ENCODE measurements at regions of chr5 and their contacts with region 1.

Region 1: GRCh38 chr5:150700594-150701293 is at the start of gene RBM22:
- DNase-seq: peak; percentile 92 to 95
- ATAC-seq: peak; percentile 98 to 100 (median 99)
- H3K4me3 ChIP-seq: peak within 1 kb of the TSS; percentile 42 to 100 (median 91)
- H3K27ac ChIP-seq: peak within 1 kb of the TSS; percentile 77 to 100 (median 98)
- H3K4me1 ChIP-seq: peaks cover 0 to 24% (median 19%) of the 10 kb centered on the region in 9 donors
- H3K27me3 ChIP-seq: no peaks in the 10 kb centered on the region
- CTCF ChIP-seq: peak; percentile 28 to 84 (median 67)
- total RNA-seq, gene RBM22: 23.4 to 41.0 (median 29.3) TPM

Region 2: DNA sequence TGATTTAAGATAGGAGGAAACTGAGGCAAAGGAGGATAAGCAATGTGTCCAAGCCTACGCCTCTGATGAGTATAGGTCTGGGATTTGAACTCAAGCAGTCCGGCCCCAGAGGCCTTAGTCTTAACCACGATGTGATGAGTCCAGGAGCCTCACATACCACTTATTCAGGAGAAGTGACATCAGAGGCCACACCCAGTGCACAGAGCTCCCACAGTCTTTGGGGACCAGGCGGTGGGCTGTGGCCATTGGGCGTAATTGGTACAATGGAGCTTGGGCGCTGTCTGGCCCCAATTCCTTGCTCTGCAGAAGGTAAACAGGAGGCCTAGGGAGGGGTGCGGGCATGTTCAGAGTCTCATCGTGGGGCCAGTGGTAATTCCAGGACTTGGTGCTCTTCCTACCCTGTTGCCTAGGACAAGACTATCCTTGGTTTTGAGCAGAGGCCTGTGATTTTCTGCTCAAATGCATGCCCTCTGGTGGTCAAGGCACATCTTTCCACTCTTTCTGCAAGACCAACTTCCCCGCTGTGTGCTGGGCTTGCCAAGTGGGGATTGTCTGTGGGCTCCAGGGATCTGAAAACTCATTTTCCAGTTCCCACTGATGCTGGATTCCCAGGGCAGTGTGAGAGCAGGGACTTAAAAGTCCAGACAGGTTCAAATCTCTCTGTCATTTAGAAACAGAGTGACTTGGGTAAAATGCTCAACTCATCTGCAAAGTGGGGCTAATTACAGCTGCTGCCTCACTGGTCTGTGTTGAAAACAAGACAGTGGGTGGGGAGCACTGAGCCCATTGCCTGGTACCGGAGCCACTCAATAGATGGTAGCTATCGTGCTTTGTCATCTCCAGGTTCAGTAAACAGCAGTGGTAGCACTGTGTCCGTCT is 177.0 kb before region 1 on chr5:
- intact Hi-C with region 1: no loop called
- DNase-seq: peak in 1 of 2 donors; percentile 58
- ATAC-seq: peak; percentile 27 to 78 (median 62)
- H3K4me3 ChIP-seq: no peak overlapping the region
- H3K27ac ChIP-seq: peak overlapping the region; percentile 27 to 90 (median 74)
- H3K4me1 ChIP-seq: peaks cover 31 to 91% (median 67%) of the 10 kb centered on the region in 9 donors
- H3K27me3 ChIP-seq: no peaks in the 10 kb centered on the region
- CTCF ChIP-seq: peak; percentile 39 to 80 (median 68)

Region 3: GRCh38 chr5:150560401-150561193 is 140.1 kb before region 1 on chr5:
- intact Hi-C with region 1: loop called in 7 of 10 experiments (anchors 2 to 5 kb)
- DNase-seq: peak in 1 of 2 donors; percentile 91
- ATAC-seq: peak; percentile 78 to 91 (median 87)
- H3K4me3 ChIP-seq: no peak overlapping the region
- H3K27ac ChIP-seq: peak overlapping the region in 1 of 10 donors; percentile 0
- H3K4me1 ChIP-seq: peaks cover 0 to 29% (median 8%) of the 10 kb centered on the region in 9 donors
- H3K27me3 ChIP-seq: no peaks in the 10 kb centered on the region
- CTCF ChIP-seq: peak; percentile 88 to 97 (median 95)

Region 4: DNA sequence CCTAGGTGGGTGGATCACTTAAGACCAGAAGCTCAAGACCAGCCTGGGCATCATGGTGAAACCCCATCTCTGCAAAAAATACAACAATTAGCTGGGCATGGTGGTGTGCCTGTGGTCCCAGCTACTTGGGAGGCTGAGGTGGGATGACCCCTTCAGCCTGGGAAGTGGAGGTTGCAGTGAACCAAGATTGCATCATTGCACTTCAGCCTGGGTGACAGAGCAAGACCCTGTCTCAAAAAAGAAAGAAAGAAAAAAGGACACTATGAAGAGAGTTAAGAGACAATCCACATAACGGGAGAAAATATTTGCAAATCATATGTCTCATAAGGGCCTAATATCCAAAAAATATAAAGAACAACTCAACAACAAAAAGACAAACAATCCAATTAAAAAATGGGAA is 134.9 kb before region 1 on chr5:
- intact Hi-C with region 1: loop called in 7 of 10 experiments (anchors 2 to 5 kb)
- DNase-seq: no peak
- ATAC-seq: no peak
- H3K4me3 ChIP-seq: no peak overlapping the region
- H3K27ac ChIP-seq: no peak overlapping the region
- H3K4me1 ChIP-seq: peaks cover 0 to 25% (median 3%) of the 10 kb centered on the region in 9 donors
- H3K27me3 ChIP-seq: no peaks in the 10 kb centered on the region
- CTCF ChIP-seq: no peak

Region 5: GRCh38 chr5:150656191-150657132 is 44.3 kb before region 1 on chr5:
- intact Hi-C with region 1: loop called in 1 of 10 experiments (anchors 5 kb)
- DNase-seq: peak; percentile 74 to 87
- ATAC-seq: peak; percentile 50 to 77 (median 56)
- H3K4me3 ChIP-seq: peak overlapping the region; percentile 10 to 64 (median 51)
- H3K27ac ChIP-seq: peak overlapping the region; percentile 79 to 100 (median 92)
- H3K4me1 ChIP-seq: peaks cover 21 to 94% (median 56%) of the 10 kb centered on the region in 9 donors
- H3K27me3 ChIP-seq: no peaks in the 10 kb centered on the region
- CTCF ChIP-seq: peak; percentile 59 to 89 (median 77)

Region 6: DNA sequence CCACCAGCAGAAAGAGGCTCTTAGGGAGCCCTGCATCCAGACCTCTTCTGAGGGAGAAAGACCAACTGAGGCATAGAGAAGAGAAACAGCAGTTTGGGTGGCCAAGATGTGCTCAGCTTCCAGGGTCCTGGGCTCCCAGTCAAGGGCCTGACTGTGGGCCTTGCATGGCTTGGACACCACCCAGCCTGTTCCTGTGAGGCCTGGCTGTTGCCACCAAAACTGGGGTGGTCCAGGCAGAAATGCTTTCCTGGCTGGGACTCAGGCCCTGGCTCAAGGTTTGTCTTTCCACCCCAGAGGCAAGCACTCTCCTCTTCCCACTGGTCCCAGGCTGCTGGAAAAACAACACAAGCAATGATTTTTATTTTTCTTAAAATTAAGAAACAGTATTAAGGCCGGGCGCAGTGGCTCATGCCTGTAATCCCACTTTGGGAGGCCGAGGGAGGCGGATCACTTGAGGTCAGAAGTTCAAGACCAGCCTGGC is 26.4 kb before region 1 on chr5:
- intact Hi-C with region 1: loop called in 1 of 10 experiments (anchors 1 kb)
- DNase-seq: peak in 1 of 2 donors; percentile 61
- ATAC-seq: peak; percentile 11 to 56 (median 32)
- H3K4me3 ChIP-seq: no peak overlapping the region
- H3K27ac ChIP-seq: peak overlapping the region; percentile 15 to 90 (median 78)
- H3K4me1 ChIP-seq: peaks cover 13 to 49% (median 41%) of the 10 kb centered on the region in 9 donors
- H3K27me3 ChIP-seq: peaks cover 0 to 21% (median 0%) of the 10 kb centered on the region in 7 donors
- CTCF ChIP-seq: peak in 1 of 9 donors; percentile 3

Region 7: GRCh38 chr5:150758531-150759333 is 58.0 kb after region 1 on chr5 and contains the start of gene DCTN4:
- intact Hi-C with region 1: loop called in 1 of 10 experiments (anchors 2 kb)
- DNase-seq: peak; percentile 96 to 97
- ATAC-seq: peak; percentile 93 to 98 (median 96)
- H3K4me3 ChIP-seq: peak within 1 kb of the TSS; percentile 56 to 88 (median 67)
- H3K27ac ChIP-seq: peak within 1 kb of the TSS; percentile 90 to 96 (median 94)
- H3K4me1 ChIP-seq: peaks cover 4 to 64% (median 31%) of the 10 kb centered on the region in 9 donors
- H3K27me3 ChIP-seq: no peaks in the 10 kb centered on the region
- CTCF ChIP-seq: peak in 3 of 9 donors; percentile 27 to 40 (median 27)
- total RNA-seq, gene DCTN4: 42.9 to 68.3 (median 58.2) TPM